ENCODE measurements at regions of chr17 and their contacts with region 1.

Region 1: GRCh38 chr17:29664743-29665480 is 42.2 kb upstream of the CORO6 start:
- DNase-seq: peak; percentile 18
- ATAC-seq: peak; percentile 94
- H3K4me3 Mint-ChIP-seq: no peak overlapping the region
- H3K27ac Mint-ChIP-seq: peak overlapping the region; percentile 85
- H3K4me1 Mint-ChIP-seq: peaks cover 32% of the 10 kb centered on the region
- H3K27me3 Mint-ChIP-seq: no peaks in the 10 kb centered on the region

Region 2: DNA sequence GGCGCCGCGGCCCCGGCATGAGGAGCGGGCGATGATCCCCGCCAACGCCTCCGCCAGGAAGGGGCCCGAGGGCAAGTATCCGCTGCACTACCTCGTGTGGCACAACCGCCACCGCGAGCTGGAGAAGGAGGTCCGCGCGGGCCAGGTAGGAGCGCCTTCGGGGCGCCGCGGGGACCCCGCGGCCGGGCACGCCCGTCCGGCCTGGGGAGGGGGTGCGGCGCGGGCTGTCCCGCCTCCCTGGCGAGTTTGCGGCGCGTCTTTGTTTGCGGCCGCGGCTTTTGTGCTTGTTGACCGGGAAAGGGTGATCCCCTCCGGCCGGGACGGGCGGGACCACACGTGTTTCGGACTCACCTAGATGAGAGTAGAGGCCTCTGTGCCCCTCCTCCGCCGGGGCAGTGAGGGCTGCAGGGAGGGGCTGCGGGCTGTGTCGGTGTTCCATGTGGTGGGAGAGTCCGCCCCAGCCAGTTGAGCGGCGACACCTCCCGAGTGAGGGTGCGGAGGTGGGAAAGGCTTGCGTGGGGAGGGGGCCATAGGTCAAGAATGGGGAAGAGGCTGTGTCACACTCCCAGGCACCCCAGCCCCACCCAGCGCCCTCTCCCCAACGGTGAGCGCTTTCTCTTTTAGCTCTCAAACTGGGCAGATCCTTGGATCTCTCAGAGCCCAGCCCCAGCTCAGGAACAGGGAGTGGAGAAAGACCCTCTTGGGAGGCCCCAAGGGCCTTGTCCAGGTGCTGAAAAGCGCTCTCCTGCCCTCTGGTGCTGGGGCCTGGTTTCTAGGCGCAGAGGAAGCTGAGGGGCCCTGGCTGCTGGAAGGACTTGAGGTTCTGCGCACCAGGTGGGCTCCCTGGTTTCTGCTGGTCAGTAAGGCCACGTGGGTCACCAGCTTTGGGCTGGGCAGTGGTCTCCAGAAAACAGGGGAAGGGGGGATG is 71.1 kb before region 1 on chr17:
- CTCF ChIA-PET with region 1: no interaction called
- POLR2A ChIA-PET with region 1: no interaction called
- intact Hi-C with region 1: no loop called
- DNase-seq: peak; percentile 67
- ATAC-seq: no peak
- H3K4me3 Mint-ChIP-seq: peak overlapping the region; percentile 74
- H3K27ac Mint-ChIP-seq: no peak overlapping the region
- H3K4me1 Mint-ChIP-seq: peaks cover 33% of the 10 kb centered on the region
- H3K27me3 Mint-ChIP-seq: no peaks in the 10 kb centered on the region

Region 3: GRCh38 chr17:29693769-29694168 is 28.9 kb after region 1 on chr17:
- CTCF ChIA-PET with region 1: interaction called, 4 read pairs
- POLR2A ChIA-PET with region 1: no interaction called
- intact Hi-C with region 1: loop called (anchors 2 kb)
- DNase-seq: no peak
- ATAC-seq: no peak
- H3K4me3 Mint-ChIP-seq: no peak overlapping the region
- H3K27ac Mint-ChIP-seq: peak overlapping the region; percentile 0
- H3K4me1 Mint-ChIP-seq: peaks cover 23% of the 10 kb centered on the region
- H3K27me3 Mint-ChIP-seq: no peaks in the 10 kb centered on the region

Region 4: GRCh38 chr17:29722411-29723198 is 57.7 kb after region 1 on chr17:
- CTCF ChIA-PET with region 1: interaction called, 3 read pairs
- POLR2A ChIA-PET with region 1: no interaction called
- intact Hi-C with region 1: loop called in 1 of 2 experiments (anchors 2 kb)
- DNase-seq: peak; percentile 38
- ATAC-seq: peak; percentile 50
- H3K4me3 Mint-ChIP-seq: peak overlapping the region; percentile 47
- H3K27ac Mint-ChIP-seq: peak overlapping the region; percentile 82
- H3K4me1 Mint-ChIP-seq: peaks cover 78% of the 10 kb centered on the region
- H3K27me3 Mint-ChIP-seq: no peaks in the 10 kb centered on the region

Region 5: DNA sequence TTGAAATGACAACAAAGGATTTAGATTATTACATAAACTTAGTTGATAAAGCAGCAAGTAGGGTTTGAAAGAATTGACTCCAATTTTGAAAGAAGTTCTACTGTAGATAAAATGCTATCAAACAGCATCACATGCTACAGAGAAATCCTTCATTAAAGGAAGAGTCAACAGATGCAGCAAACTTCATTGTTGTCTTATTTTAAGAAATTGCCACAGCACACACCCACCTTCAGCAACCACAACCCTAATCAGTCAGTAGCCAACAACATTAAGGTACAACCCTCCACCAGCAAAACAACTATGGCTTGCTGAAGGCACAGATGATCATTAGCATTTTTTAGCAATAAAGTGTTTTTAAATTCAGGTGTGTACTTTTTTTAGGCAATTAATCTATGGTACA is 376.6 kb after region 1 on chr17:
- CTCF ChIA-PET with region 1: no interaction called
- POLR2A ChIA-PET with region 1: no interaction called
- intact Hi-C with region 1: no loop called
- DNase-seq: no peak
- ATAC-seq: no peak
- H3K4me3 Mint-ChIP-seq: no peak overlapping the region
- H3K27ac Mint-ChIP-seq: no peak overlapping the region
- H3K4me1 Mint-ChIP-seq: no peaks in the 10 kb centered on the region
- H3K27me3 Mint-ChIP-seq: peaks cover 10% of the 10 kb centered on the region

Measured in activated CD4-positive, alpha-beta T cell treated with anti-CD3 and anti-CD28 coated beads for 36 hours (primary cell).